Spleen (tissue), 13 donors: ENCODE measurements at regions of chr3 and their contacts with region 1.

Region 1: GRCh38 chr3:172039436-172040077 is at the start of gene FNDC3B:
- DNase-seq: peak; percentile 96
- H3K4me3 ChIP-seq: peak within 1 kb of the TSS; percentile 74 to 99 (median 90)
- H3K27ac ChIP-seq: peak within 1 kb of the TSS; percentile 93 to 99 (median 97)
- H3K4me1 ChIP-seq: peaks cover 7 to 63% (median 39%) of the 10 kb centered on the region in 6 donors
- H3K27me3 ChIP-seq: peaks cover 0 to 10% (median 0%) of the 10 kb centered on the region in 7 donors
- CTCF ChIP-seq: no peak
- POLR2A ChIP-seq: peak in 1 of 3 donors; percentile 87
- total RNA-seq, gene FNDC3B: 88.8 to 149 (median 110) TPM

Region 2: DNA sequence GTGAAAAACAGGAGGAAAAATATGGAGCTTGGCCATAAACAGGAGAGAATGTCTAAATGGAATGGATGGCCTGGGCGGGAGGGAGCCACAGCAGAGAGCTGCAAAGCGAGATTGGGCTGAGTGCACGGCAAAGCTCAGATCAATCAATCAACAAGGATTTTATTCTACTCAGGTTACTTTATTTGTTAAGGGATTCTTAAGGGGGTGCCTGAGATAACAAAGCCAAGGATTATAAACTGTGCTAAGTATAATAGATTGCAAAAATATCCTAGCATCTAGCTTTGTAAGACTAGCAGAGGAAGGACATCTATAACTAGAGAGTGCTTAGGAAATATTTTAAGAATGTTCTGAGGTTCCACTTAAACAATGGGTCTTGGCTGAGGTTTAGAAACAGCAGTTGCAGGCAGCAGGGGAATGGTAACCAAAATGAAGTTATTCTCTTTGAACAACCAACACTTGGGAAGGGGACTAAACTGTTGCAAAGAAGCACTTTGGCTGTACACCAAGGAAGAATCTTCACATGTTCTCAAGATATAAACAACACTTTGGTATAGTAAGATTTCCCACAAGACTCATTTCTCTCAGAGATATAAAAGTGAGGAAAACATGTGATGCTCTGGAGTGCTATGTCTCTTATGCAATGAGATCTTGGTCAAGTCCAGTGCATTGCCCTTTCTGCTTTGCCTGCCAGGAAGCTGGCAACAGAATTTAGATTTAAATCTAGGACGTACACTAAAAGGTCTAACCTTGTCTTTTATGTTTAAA is 160.9 kb before region 1 on chr3:
- intact Hi-C with region 1: no loop called
- DNase-seq: no peak
- H3K4me3 ChIP-seq: no peak overlapping the region
- H3K27ac ChIP-seq: no peak overlapping the region
- H3K4me1 ChIP-seq: peaks cover 0 to 21% (median 7%) of the 10 kb centered on the region in 6 donors
- H3K27me3 ChIP-seq: no peaks in the 10 kb centered on the region
- CTCF ChIP-seq: no peak
- POLR2A ChIP-seq: no peak

Region 3: GRCh38 chr3:172321035-172321434 is 281.5 kb after region 1 on chr3:
- intact Hi-C with region 1: loop called (anchors 10 kb)
- DNase-seq: no peak
- H3K4me3 ChIP-seq: no peak overlapping the region
- H3K27ac ChIP-seq: peak overlapping the region in 6 of 8 donors; percentile 22 to 83 (median 65)
- H3K4me1 ChIP-seq: peaks cover 0 to 51% (median 27%) of the 10 kb centered on the region in 6 donors
- H3K27me3 ChIP-seq: no peaks in the 10 kb centered on the region
- CTCF ChIP-seq: peak in 1 of 11 experiments; percentile 30
- POLR2A ChIP-seq: no peak